Left cardiac atrium (tissue), 4 donors: ENCODE measurements at regions of chr12 and their contacts with region 1.

Region 1: GRCh38 chr12:115916910-115917668 is 360.4 kb downstream of the MED13L start:
- DNase-seq: peak; percentile 50
- ATAC-seq: peak; percentile 74 to 81

Region 2: DNA sequence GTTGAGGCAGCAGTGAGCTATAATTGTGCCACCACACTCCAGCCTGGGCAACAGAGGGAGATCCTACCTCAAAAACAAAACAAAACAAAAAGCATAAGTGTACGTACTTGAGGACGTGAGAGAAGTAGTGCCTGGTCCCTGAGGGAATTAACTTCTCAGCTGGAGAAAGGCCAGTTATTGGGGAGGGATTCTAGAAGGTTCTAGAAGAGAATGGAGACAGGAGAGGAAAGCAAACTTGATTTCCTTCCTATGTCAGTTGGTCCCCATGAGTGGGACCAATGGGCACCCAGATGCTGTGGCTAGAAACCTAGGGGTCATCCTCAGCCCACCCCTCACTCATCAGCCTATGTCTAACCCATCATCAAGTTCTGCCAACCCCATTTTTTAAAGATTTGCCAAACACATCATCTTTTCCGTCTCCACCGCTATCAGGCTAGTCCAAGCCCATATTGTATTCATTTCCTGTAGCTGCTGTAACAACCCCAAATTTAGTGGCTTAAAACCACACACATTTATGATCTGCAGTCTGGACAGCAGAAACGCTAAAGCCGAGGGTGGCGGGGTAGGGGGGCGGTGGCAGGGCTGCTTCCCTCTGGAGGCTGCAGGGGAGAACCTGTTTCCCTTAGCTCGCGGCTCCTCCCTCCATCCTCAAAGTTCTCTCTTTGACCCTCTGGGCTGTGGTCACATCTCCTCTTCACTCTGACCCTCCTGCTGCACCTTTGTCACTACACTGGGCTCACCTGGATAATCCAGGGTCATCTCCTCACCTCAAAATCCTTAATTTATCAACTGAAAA is 1943.8 kb before region 1 on chr12:
- intact Hi-C with region 1: loop called in 1 of 2 experiments (anchors 10 kb)
- DNase-seq: no peak
- ATAC-seq: no peak

Region 3: GRCh38 chr12:114662512-114663177 is 1254.4 kb before region 1 on chr12:
- intact Hi-C with region 1: loop called (anchors 1 to 2 kb)
- DNase-seq: peak; percentile 76
- ATAC-seq: peak; percentile 67 to 71

Region 4: GRCh38 chr12:115632308-115632707 is 284.8 kb before region 1 on chr12:
- intact Hi-C with region 1: no loop called
- DNase-seq: no peak
- ATAC-seq: no peak